Activated naive CD4-positive, alpha-beta T cell treated with anti-CD3 and anti-CD28 coated beads, Interleukin-2, amount 10 ng/mL, durations not matched to agents 7 days and 5 days (primary cell): ENCODE measurements at regions of chr7 and their contacts with region 1.

Region 1: GRCh38 chr7:100803398-100804233 is 23.7 kb downstream of the EPHB4 start:
- DNase-seq: peak; percentile 70
- H3K4me3 Mint-ChIP-seq: no peak overlapping the region
- H3K27ac Mint-ChIP-seq: no peak overlapping the region
- H3K4me1 Mint-ChIP-seq: peaks cover 13% of the 10 kb centered on the region
- H3K27me3 Mint-ChIP-seq: peaks cover 44% of the 10 kb centered on the region

Region 2: GRCh38 chr7:99910976-99911375 is 892.6 kb before region 1 on chr7:
- CTCF ChIA-PET with region 1: no interaction called
- DNase-seq: no peak
- H3K4me3 Mint-ChIP-seq: no peak overlapping the region
- H3K27ac Mint-ChIP-seq: no peak overlapping the region
- H3K4me1 Mint-ChIP-seq: peaks cover 31% of the 10 kb centered on the region
- H3K27me3 Mint-ChIP-seq: no peaks in the 10 kb centered on the region

Region 3: GRCh38 chr7:100818338-100818737 is 14.7 kb after region 1 on chr7:
- CTCF ChIA-PET with region 1: interaction called, 14 read pairs
- DNase-seq: no peak
- H3K4me3 Mint-ChIP-seq: no peak overlapping the region
- H3K27ac Mint-ChIP-seq: no peak overlapping the region
- H3K4me1 Mint-ChIP-seq: no peaks in the 10 kb centered on the region
- H3K27me3 Mint-ChIP-seq: peaks cover 4% of the 10 kb centered on the region

Region 4: GRCh38 chr7:100852048-100852872 is 48.6 kb after region 1 on chr7 and contains the start of gene SLC12A9:
- CTCF ChIA-PET with region 1: interaction called, 160 read pairs
- DNase-seq: peak; percentile 93
- H3K4me3 Mint-ChIP-seq: peak within 1 kb of the TSS; percentile 96
- H3K27ac Mint-ChIP-seq: peak within 1 kb of the TSS; percentile 89
- H3K4me1 Mint-ChIP-seq: peaks cover 20% of the 10 kb centered on the region
- H3K27me3 Mint-ChIP-seq: no peaks in the 10 kb centered on the region

Region 5: GRCh38 chr7:100896732-100897608 is 93.4 kb after region 1 on chr7:
- CTCF ChIA-PET with region 1: no interaction called
- DNase-seq: peak; percentile 72
- H3K4me3 Mint-ChIP-seq: peak overlapping the region; percentile 39
- H3K27ac Mint-ChIP-seq: no peak overlapping the region
- H3K4me1 Mint-ChIP-seq: peaks cover 16% of the 10 kb centered on the region
- H3K27me3 Mint-ChIP-seq: peaks cover 86% of the 10 kb centered on the region